Posterior vena cava (tissue), 2 donors: ENCODE measurements at regions of chr14 and their contacts with region 1.

Region 1: DNA sequence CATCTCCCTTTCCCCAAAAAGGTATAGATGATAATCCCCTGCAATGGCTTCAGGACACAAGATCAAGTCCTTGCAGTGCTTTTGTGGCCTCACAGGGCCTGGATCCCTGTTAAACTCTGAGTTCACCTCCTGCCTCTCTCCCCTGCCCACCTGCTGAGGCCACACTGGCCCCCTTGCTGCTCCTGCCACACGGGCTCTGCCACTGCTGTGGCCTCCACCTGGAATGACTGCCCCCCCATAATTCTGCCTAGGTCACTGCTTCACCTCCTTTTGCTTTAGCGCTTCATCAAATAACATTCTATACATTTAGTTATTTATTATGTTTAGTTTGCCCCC is 653 bp upstream of the IFI27 start:
- DNase-seq: no peak

Region 2: GRCh38 chr14:94041551-94042346 is 68.1 kb before region 1 on chr14:
- intact Hi-C with region 1: loop called in 1 of 2 experiments (anchors 2 kb)
- DNase-seq: peak; percentile 87